ENCODE measurements at regions of chr1 and their contacts with region 1.

Region 1: DNA sequence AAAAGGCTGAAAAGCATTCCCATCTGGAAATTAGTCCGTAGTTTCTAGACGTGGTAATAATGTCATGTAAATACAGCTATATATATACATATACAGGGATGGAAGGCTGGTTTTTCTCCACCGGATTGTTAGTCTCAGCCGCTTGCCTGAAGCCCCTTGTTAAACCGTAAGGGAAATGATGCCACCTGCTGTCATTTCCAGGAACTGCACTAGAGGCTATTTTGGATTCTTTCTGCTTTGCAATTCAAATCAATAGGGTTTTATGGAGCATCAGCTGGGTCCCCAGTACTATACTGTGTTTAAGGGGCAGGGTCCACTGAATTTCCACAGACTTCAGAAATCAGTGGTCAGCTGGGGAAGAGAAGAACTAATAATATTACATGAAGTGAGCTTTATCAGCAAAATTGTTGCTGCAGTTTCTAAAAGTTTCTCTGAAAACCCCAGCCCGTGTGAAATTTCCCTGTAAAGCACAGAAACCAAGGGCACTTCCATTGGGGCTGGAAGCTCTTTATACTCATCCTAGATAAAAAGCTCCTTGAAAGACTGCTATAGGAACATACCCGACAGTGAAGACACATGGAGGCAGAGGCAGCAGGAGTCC is 33.8 kb upstream of the MPZL1 start:
- DNase-seq: peak; percentile 70 to 78 (median 73)
- H3K4me3 ChIP-seq: no peak overlapping the region
- H3K4me3 Mint-ChIP-seq: no peak overlapping the region
- H3K27ac ChIP-seq: peak overlapping the region; percentile 14
- H3K27ac Mint-ChIP-seq: peak overlapping the region; percentile 55 to 87 (median 70)
- H3K4me1 ChIP-seq: peaks cover 4% of the 10 kb centered on the region
- H3K4me1 Mint-ChIP-seq: peaks cover 10 to 35% (median 16%) of the 10 kb centered on the region in 4 donors
- H3K27me3 ChIP-seq: no peaks in the 10 kb centered on the region
- H3K27me3 Mint-ChIP-seq: no peaks in the 10 kb centered on the region

Region 2: GRCh38 chr1:167594822-167595221 is 93.2 kb before region 1 on chr1:
- CTCF ChIA-PET with region 1: interaction called, 302 read pairs
- POLR2A ChIA-PET with region 1: interaction called, 46 read pairs
- intact Hi-C with region 1: loop called (anchors 1 kb)
- DNase-seq: no peak
- H3K4me3 ChIP-seq: no peak overlapping the region
- H3K4me3 Mint-ChIP-seq: no peak overlapping the region
- H3K27ac ChIP-seq: no peak overlapping the region
- H3K27ac Mint-ChIP-seq: no peak overlapping the region
- H3K4me1 ChIP-seq: peaks cover 2% of the 10 kb centered on the region
- H3K4me1 Mint-ChIP-seq: peaks cover 2 to 3% (median 2%) of the 10 kb centered on the region in 4 donors
- H3K27me3 ChIP-seq: no peaks in the 10 kb centered on the region
- H3K27me3 Mint-ChIP-seq: no peaks in the 10 kb centered on the region

Region 3: GRCh38 chr1:167617153-167618147 is 70.6 kb before region 1 on chr1:
- CTCF ChIA-PET with region 1: interaction called, 14 read pairs
- POLR2A ChIA-PET with region 1: no interaction called
- intact Hi-C with region 1: no loop called
- DNase-seq: no peak
- H3K4me3 ChIP-seq: peak overlapping the region in 1 of 2 donors; percentile 29
- H3K4me3 Mint-ChIP-seq: peak overlapping the region; percentile 55 to 90 (median 80)
- H3K27ac ChIP-seq: peak overlapping the region; percentile 35
- H3K27ac Mint-ChIP-seq: peak overlapping the region; percentile 77 to 93 (median 88)
- H3K4me1 ChIP-seq: peaks cover 60% of the 10 kb centered on the region
- H3K4me1 Mint-ChIP-seq: peaks cover 44 to 75% (median 59%) of the 10 kb centered on the region in 4 donors
- H3K27me3 ChIP-seq: no peaks in the 10 kb centered on the region
- H3K27me3 Mint-ChIP-seq: no peaks in the 10 kb centered on the region

Region 4: GRCh38 chr1:167650269-167651160 is 37.5 kb before region 1 on chr1:
- CTCF ChIA-PET with region 1: interaction called, 17 read pairs
- POLR2A ChIA-PET with region 1: interaction called, 3 read pairs
- intact Hi-C with region 1: no loop called
- DNase-seq: no peak
- H3K4me3 ChIP-seq: peak overlapping the region in 1 of 2 donors; percentile 12
- H3K4me3 Mint-ChIP-seq: peak overlapping the region in 7 of 8 donors; percentile 63 to 87 (median 75)
- H3K27ac ChIP-seq: peak overlapping the region; percentile 55
- H3K27ac Mint-ChIP-seq: peak overlapping the region; percentile 87 to 95 (median 92)
- H3K4me1 ChIP-seq: peaks cover 98% of the 10 kb centered on the region
- H3K4me1 Mint-ChIP-seq: peaks cover 71 to 92% (median 84%) of the 10 kb centered on the region in 4 donors
- H3K27me3 ChIP-seq: no peaks in the 10 kb centered on the region
- H3K27me3 Mint-ChIP-seq: no peaks in the 10 kb centered on the region

Region 5: DNA sequence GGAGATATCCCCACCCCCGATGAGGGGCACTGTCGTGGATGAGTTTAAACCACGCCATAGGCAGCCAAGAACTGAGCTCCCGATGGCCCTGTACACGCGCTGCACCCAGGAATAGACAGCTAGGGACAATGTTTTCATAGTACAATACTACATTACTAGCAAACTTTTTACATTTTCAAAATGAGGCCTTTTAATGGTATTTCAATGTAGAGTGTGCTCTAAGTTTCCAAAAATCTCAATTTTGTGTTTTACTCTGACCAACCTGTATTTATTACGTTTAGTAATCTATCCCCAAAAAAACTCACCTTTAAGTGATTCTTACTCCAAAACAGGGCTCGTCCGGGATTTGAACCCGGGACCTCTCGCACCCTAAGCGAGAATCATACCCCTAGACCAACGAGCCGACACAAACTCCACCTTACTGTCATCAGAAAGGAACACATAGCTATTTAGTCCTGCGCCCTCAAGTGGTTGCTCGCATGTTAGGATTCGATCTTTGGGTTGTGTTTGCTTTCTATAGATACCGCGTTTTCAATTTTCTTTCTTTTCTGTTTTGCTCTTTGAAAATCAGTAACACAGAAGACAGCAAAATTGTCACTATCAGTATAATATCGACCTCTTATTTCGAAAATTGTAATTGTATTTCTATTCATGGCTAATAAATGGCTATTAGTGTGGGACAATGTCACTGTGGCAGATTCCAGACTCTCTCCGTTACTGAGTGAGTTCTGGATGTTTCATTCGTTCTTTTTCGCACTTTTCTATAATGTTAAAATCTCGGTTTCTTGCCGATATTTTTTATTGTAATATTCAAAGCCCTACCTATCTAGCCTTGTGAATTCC is 27.4 kb after region 1 on chr1:
- CTCF ChIA-PET with region 1: interaction called, 18 read pairs
- POLR2A ChIA-PET with region 1: interaction called, 9 read pairs
- intact Hi-C with region 1: no loop called
- DNase-seq: peak; percentile 87 to 91 (median 88)
- H3K4me3 ChIP-seq: peak overlapping the region; percentile 80 to 87
- H3K4me3 Mint-ChIP-seq: peak overlapping the region; percentile 84 to 98 (median 92)
- H3K27ac ChIP-seq: peak overlapping the region; percentile 39
- H3K27ac Mint-ChIP-seq: peak overlapping the region; percentile 90 to 99 (median 94)
- H3K4me1 ChIP-seq: peaks cover 31% of the 10 kb centered on the region
- H3K4me1 Mint-ChIP-seq: peaks cover 19 to 49% (median 38%) of the 10 kb centered on the region in 4 donors
- H3K27me3 ChIP-seq: no peaks in the 10 kb centered on the region
- H3K27me3 Mint-ChIP-seq: peaks cover 4 to 12% of the 10 kb centered on the region in 2 donors

Region 6: DNA sequence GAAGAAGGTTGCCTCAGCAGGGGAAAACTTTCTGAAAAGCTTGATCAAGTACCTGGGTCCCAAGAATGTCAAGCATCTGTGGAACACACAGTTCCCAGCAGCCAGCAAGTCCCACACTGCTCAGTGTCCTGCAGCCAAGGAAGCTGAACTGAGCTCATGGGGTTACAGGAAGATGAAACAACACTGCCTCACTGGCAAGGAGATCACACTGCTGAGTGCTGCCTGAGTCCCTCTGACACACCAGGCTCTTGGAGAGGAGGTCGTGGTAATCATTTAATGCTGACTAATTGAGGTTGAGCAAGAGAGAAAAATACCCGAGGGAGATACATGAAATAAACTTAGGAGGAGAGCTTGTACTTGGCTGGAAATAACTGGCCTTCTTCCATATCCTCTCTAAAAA is 109.0 kb after region 1 on chr1:
- CTCF ChIA-PET with region 1: no interaction called
- POLR2A ChIA-PET with region 1: no interaction called
- intact Hi-C with region 1: no loop called
- DNase-seq: no peak
- H3K4me3 ChIP-seq: no peak overlapping the region
- H3K4me3 Mint-ChIP-seq: no peak overlapping the region
- H3K27ac ChIP-seq: no peak overlapping the region
- H3K27ac Mint-ChIP-seq: no peak overlapping the region
- H3K4me1 ChIP-seq: no peaks in the 10 kb centered on the region
- H3K4me1 Mint-ChIP-seq: peaks cover 0 to 3% (median under 1%) of the 10 kb centered on the region in 4 donors
- H3K27me3 ChIP-seq: no peaks in the 10 kb centered on the region
- H3K27me3 Mint-ChIP-seq: no peaks in the 10 kb centered on the region